Mammary epithelial cell (primary cell): ENCODE measurements at regions of chr20 and their contacts with region 1.

Region 1: DNA sequence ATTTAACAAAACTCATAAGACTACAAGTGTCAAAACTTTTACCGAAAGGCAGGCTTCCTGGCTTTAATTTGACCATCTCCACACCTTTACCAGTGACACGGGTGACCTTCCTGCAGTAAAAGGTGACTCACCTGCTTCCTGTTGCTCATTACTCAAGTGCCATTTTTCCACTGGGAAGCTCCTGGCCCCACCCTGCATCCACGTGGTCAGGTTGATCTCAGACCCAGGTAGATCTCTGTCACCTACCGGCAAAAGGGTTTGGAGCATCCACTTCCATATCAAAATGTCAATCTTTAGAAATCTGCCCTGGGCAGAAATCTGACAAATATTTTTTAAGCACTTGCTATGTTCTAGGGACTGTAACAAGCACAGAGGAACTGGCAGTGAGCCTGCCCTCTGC is 31.9 kb upstream of the CDH4 start:
- DNase-seq: peak; percentile 2
- H3K4me3 ChIP-seq: no peak overlapping the region
- H3K27ac ChIP-seq: no peak overlapping the region
- H3K4me1 ChIP-seq: peaks cover 7% of the 10 kb centered on the region
- H3K27me3 ChIP-seq: peaks cover 3% of the 10 kb centered on the region
- CTCF ChIP-seq: no peak

Region 2: GRCh38 chr20:60803335-60804055 is 416.7 kb before region 1 on chr20:
- CTCF ChIA-PET with region 1: no interaction called
- dilution Hi-C with region 1: no loop called
- in situ Hi-C with region 1: no loop called
- intact Hi-C with region 1: no loop called
- DNase-seq: no peak
- H3K4me3 ChIP-seq: no peak overlapping the region
- H3K27ac ChIP-seq: no peak overlapping the region
- H3K4me1 ChIP-seq: no peaks in the 10 kb centered on the region
- H3K27me3 ChIP-seq: peaks cover 2% of the 10 kb centered on the region
- CTCF ChIP-seq: no peak

Region 3: DNA sequence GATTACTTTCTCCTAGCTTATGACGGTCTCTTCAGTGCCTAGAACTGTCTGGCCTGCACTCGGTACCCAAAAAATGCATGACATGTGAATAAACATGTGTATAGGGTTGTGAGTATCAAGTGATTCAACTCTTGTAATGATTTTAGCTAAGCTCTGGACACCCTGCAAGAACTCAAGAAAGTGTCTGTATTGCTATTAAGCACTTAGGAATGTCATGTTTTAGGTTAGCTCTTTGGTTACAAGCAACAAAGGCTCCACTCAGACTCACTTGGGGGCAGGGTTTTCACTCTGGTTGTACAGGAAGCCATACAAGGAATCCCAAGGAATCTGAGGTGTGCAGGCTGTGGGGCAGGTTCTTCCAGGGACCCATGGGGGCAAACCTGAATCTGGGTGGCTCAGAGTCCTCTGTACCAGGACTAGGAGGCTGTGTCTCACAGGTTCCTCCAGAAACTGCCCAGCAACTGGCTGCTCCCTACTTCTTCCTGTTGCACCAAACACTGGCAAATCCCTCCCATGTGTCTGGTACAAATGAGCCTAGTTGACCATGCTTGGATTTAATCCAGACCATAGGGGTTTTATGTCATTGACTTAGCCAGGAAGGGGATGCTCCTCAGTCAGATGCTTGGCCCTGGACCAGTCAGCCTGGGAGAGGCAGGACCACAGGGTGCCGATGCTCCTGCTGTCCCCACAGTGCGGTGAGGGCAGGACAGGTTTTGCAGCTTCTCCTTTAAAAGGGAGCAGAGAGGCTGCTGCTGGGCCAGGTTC is 46.0 kb before region 1 on chr20:
- CTCF ChIA-PET with region 1: no interaction called
- dilution Hi-C with region 1: no loop called
- in situ Hi-C with region 1: no loop called
- intact Hi-C with region 1: loop called (anchors 5 kb)
- DNase-seq: peak; percentile 65
- H3K4me3 ChIP-seq: no peak overlapping the region
- H3K27ac ChIP-seq: no peak overlapping the region
- H3K4me1 ChIP-seq: peaks cover 11% of the 10 kb centered on the region
- H3K27me3 ChIP-seq: no peaks in the 10 kb centered on the region
- CTCF ChIP-seq: no peak

Region 4: GRCh38 chr20:61263084-61263695 is 43.0 kb after region 1 on chr20:
- CTCF ChIA-PET with region 1: no interaction called
- dilution Hi-C with region 1: no loop called
- in situ Hi-C with region 1: no loop called
- intact Hi-C with region 1: no loop called
- DNase-seq: no peak
- H3K4me3 ChIP-seq: no peak overlapping the region
- H3K27ac ChIP-seq: no peak overlapping the region
- H3K4me1 ChIP-seq: no peaks in the 10 kb centered on the region
- H3K27me3 ChIP-seq: no peaks in the 10 kb centered on the region
- CTCF ChIP-seq: peak; percentile 92 to 97